ENCODE measurements at regions of chr3 and their contacts with region 1.

Region 1: DNA sequence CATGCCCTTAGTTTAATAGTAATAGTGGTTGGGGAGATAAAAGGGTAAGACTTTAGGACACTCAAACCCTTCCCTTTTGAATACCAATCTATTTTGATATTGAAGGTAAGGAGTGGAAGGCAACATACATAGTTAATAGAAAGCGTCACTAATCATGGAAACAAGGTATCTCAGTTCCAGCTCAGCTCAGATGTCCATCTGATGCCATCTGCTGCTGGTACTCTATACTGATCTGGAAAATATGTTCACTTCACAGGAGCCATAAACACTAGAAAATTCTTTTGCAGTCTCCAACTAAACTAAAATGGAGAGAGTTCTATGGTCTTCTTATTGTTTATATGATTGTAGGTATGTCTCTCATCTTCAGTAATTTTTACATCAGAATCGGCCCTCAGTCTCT is 1777.1 kb downstream of the OTOL1 start:
- DNase-seq: no peak
- ATAC-seq: no peak

Region 2: DNA sequence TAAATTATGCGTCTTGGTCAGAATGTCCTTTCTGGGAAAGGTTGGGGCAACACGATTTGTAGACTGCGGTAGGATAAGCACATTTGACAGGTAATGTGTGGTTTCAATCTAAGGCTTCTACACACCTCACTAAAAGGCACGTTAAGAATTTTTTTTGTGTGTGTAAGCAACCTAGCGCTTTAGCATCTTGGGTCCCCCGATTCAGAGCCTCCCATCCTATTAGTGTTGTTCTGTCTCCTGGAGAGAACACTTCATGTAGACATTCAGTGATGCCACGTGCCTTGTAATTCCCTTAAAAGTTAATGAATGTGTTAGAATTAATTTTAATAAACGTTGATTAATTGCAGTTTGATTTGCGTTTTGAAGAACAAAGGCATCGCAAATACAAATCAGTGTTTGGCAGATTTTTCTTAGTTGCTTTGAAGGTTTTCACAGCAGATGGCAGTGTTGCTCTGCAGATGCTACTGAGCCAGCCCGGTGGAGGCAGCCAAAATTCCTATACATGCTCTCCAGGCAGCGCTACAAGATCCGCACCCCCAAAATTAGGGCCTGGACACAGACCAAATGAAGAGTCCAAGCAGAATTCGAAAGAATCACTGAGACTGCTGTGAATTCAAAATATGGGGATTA is 1713.6 kb before region 1 on chr3:
- intact Hi-C with region 1: loop called in 1 of 2 experiments (anchors 10 kb)
- DNase-seq: peak; percentile 39
- ATAC-seq: peak; percentile 65 to 75

Region 3: GRCh38 chr3:161914737-161915417 is 1358.8 kb before region 1 on chr3:
- intact Hi-C with region 1: loop called in 1 of 2 experiments (anchors 10 kb)
- DNase-seq: peak; percentile 33
- ATAC-seq: peak; percentile 96 to 97

Region 4: DNA sequence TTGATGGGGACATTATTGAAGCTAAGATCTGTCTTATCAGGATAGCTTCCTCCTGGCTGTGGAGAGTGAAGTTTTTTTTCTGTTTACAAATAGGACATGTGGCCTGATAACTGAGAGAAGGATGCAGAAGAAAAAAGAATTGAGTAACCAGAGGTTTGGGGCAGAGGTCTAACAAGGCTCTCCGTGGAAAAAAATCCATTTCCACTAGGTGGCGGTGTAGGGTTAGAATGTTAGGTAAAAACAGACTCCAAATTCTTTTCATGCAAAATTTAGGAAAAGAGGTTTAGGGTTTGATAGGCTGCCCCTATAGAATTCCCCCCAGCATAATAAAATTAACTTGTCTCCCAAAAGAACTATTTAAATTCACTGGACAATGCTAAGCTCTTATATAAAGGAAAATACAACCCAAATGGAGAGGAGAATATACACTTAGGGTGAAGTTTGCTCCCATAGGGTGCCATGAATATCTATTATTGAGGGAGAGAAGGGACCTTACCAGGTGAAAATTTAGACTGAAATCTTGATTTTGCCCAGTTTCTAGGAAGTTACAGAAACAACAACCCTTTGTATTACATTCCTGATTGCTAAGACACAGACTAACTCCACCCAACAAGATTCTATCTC is 216.7 kb before region 1 on chr3:
- intact Hi-C with region 1: loop called in 1 of 2 experiments (anchors 10 kb)
- DNase-seq: no peak
- ATAC-seq: no peak